ENCODE measurements at regions of chr5 and their contacts with region 1.

Region 1: DNA sequence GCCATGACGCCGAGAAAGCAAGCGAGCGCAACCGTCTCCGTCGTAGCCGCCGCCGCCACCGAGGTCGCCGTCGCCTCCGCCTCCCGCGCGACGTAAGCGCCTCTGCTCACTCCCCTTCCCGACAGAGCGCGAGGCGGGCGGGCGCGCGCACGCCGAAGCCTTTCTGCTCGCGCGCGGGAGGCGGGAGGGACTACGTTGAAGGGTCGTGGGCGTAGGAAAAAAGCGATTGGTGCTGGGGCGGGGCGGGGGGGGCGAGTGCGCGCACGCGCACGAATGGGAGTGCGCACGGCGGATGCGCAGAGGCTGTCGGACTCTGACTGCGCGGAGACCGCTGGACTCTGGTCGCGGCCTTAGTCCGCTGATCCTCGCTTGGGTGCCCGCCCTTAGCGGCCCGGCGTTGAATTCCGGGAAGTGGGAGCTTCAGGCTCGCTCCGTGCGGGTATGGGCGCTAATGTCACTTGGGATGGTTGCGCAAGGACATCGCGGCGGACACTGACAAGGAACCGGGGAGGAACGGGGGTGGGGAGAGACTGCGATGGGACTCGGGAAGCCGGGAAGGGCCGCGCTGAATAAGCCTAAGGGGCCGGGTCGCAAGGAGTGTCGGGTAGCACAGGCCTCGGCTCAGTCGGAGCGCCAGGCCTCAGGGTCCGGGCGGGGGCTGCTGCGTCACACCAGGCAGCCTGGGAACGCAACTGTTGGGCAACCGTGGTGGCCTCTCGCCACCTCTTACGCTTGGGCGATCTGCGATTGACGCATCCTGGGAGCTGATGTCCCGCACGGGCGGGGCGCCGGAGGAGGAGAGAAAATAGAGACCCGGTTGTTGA is at the start of gene CHD1:
- DNase-seq: peak; percentile 98
- H3K4me3 Mint-ChIP-seq: peak within 1 kb of the TSS; percentile 78
- H3K27ac Mint-ChIP-seq: peak within 1 kb of the TSS; percentile 100
- H3K4me1 Mint-ChIP-seq: peaks cover 16% of the 10 kb centered on the region
- H3K27me3 Mint-ChIP-seq: no peaks in the 10 kb centered on the region
- CTCF ChIP-seq: no peak
- total RNA-seq, gene CHD1: 50.8 and 54.7 TPM in 2 replicates

Region 2: GRCh38 chr5:98911280-98912040 is 17.6 kb before region 1 on chr5:
- CTCF ChIA-PET with region 1: interaction called, 5 read pairs
- POLR2A ChIA-PET with region 1: interaction called, 78 read pairs
- intact Hi-C with region 1: no loop called
- DNase-seq: no peak
- H3K4me3 Mint-ChIP-seq: no peak overlapping the region
- H3K27ac Mint-ChIP-seq: no peak overlapping the region
- H3K4me1 Mint-ChIP-seq: peaks cover 20% of the 10 kb centered on the region
- H3K27me3 Mint-ChIP-seq: no peaks in the 10 kb centered on the region
- CTCF ChIP-seq: no peak

Region 3: GRCh38 chr5:98940581-98940980 is 11.5 kb after region 1 on chr5:
- CTCF ChIA-PET with region 1: interaction called, 5 read pairs
- POLR2A ChIA-PET with region 1: interaction called, 167 read pairs
- intact Hi-C with region 1: no loop called
- DNase-seq: no peak
- H3K4me3 Mint-ChIP-seq: no peak overlapping the region
- H3K27ac Mint-ChIP-seq: peak overlapping the region; percentile 10
- H3K4me1 Mint-ChIP-seq: peaks cover 41% of the 10 kb centered on the region
- H3K27me3 Mint-ChIP-seq: no peaks in the 10 kb centered on the region
- CTCF ChIP-seq: no peak

Region 4: GRCh38 chr5:99004960-99005359 is 75.9 kb after region 1 on chr5:
- CTCF ChIA-PET with region 1: no interaction called
- POLR2A ChIA-PET with region 1: interaction called, 23 read pairs
- intact Hi-C with region 1: no loop called
- DNase-seq: no peak
- H3K4me3 Mint-ChIP-seq: no peak overlapping the region
- H3K27ac Mint-ChIP-seq: no peak overlapping the region
- H3K4me1 Mint-ChIP-seq: peaks cover 11% of the 10 kb centered on the region
- H3K27me3 Mint-ChIP-seq: no peaks in the 10 kb centered on the region
- CTCF ChIP-seq: no peak

Region 5: GRCh38 chr5:99060306-99061261 is 131.5 kb after region 1 on chr5:
- CTCF ChIA-PET with region 1: interaction called, 5 read pairs
- POLR2A ChIA-PET with region 1: interaction called, 6 read pairs
- intact Hi-C with region 1: loop called (anchors 1 kb)
- DNase-seq: peak; percentile 83
- H3K4me3 Mint-ChIP-seq: no peak overlapping the region
- H3K27ac Mint-ChIP-seq: no peak overlapping the region
- H3K4me1 Mint-ChIP-seq: peaks cover 20% of the 10 kb centered on the region
- H3K27me3 Mint-ChIP-seq: no peaks in the 10 kb centered on the region
- CTCF ChIP-seq: peak; percentile 83

Measured in MCF 10A (cell line).